ENCODE measurements at regions of chr3 and their contacts with region 1.

Region 1: GRCh38 chr3:37974121-37975083 is 16.2 kb upstream of the VILL start:
- DNase-seq: peak; percentile 82 to 91 (median 86)
- ATAC-seq: peak; percentile 99
- H3K4me3 ChIP-seq: no peak overlapping the region
- H3K27ac ChIP-seq: no peak overlapping the region
- H3K4me1 ChIP-seq: peaks cover 0 to 3% of the 10 kb centered on the region in 2 experiments; a peak in 2 of 5 replicates
- H3K27me3 ChIP-seq: no peaks in the 10 kb centered on the region
- CTCF ChIP-seq: peak; percentile 98 to 99 (median 98)
- EP300 ChIP-seq: peak; percentile 44; the same call in 1 of the 2 replicates
- POLR2A ChIP-seq: no peak
- RAD21 ChIP-seq: peak; percentile 91 to 97

Region 2: DNA sequence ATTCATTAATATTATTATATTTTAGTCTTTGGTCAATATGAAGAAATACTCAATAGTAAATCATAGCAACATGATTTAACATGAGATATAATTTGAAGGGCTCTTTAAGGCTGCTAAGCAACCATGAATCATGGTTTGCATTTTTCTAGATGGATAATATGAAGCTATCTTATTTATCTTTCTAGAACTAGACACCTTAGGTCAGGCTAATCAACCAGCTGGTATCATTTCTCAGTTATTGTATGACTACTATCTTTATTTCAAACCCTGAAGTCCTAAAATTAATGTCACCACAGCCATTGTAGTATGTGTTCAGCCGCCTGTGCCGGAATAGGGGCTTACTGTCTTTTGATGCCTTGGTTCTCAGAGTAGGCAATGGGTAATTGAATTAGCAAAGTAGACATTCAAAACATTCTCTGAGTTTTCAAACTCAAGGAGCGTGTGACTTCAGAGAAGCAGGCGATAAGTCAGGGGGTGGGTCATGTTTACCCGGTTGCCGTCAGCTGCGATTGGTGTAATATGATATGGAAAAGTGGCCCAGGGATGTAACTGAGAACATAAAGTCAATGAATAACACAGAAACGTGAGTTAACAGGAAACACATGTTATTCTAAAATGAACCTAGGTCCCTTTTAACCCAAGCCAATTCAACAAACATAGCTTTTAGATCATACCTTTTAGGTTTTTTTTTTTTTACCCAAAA is 206.1 kb before region 1 on chr3:
- CTCF ChIA-PET with region 1: no interaction called
- POLR2A ChIA-PET with region 1: no interaction called
- in situ Hi-C with region 1: no loop called
- intact Hi-C with region 1: no loop called
- DNase-seq: peak in 2 of 4 experiments; percentile 38 to 55
- ATAC-seq: peak; percentile 48; the same call in 2 of the 3 replicates
- H3K4me3 ChIP-seq: no peak overlapping the region
- H3K27ac ChIP-seq: no peak overlapping the region
- H3K4me1 ChIP-seq: peaks cover 17 to 35% of the 10 kb centered on the region in 2 experiments; a peak in 3 of 5 replicates
- H3K27me3 ChIP-seq: peaks cover 17 to 35% of the 10 kb centered on the region in 2 experiments
- CTCF ChIP-seq: no peak
- EP300 ChIP-seq: no peak
- POLR2A ChIP-seq: no peak
- RAD21 ChIP-seq: no peak

Region 3: DNA sequence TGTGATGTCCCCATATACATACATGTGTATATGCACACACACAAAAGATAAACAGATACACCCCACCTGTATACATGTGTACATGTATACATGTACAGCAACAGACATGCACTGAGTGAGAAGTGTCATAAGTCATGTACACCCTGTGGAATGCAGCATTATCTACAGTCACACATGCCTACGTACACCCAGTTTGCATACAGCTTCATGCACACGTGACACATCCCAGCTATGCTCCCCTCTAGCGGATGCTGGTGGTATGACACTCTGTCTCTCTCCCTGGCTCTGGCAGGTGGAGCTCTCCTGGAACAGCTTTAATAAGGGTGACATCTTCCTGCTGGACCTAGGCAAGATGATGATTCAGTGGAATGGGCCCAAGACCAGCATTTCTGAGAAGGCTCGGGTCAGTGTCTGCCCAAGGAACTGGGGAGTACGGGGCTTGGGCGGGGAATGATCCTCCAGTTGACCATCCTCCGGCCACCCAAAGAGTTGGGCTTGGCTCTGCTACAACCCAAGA is 22.4 kb after region 1 on chr3:
- CTCF ChIA-PET with region 1: interaction called, 62 read pairs
- POLR2A ChIA-PET with region 1: interaction called, 6 read pairs
- in situ Hi-C with region 1: no loop called
- intact Hi-C with region 1: no loop called
- DNase-seq: peak; percentile 69 to 95 (median 78)
- ATAC-seq: peak; percentile 50
- H3K4me3 ChIP-seq: no peak overlapping the region
- H3K27ac ChIP-seq: peak overlapping the region; percentile 27; the same call in 2 of the 3 replicates
- H3K4me1 ChIP-seq: peaks cover 61% of the 10 kb centered on the region in 2 experiments
- H3K27me3 ChIP-seq: no peaks in the 10 kb centered on the region
- CTCF ChIP-seq: peak; percentile 95 to 99 (median 98)
- EP300 ChIP-seq: peak; percentile 69
- POLR2A ChIP-seq: no peak
- RAD21 ChIP-seq: peak; percentile 12 to 75; a peak in 2 of 4 replicates

Region 4: GRCh38 chr3:38018296-38019266 is 44.2 kb after region 1 on chr3:
- CTCF ChIA-PET with region 1: no interaction called
- POLR2A ChIA-PET with region 1: no interaction called
- in situ Hi-C with region 1: no loop called
- intact Hi-C with region 1: loop called (anchors 1 kb)
- DNase-seq: peak; percentile 93 to 97 (median 96)
- ATAC-seq: peak; percentile 82
- H3K4me3 ChIP-seq: peak overlapping the region; percentile 50
- H3K27ac ChIP-seq: peak overlapping the region; percentile 79
- H3K4me1 ChIP-seq: peaks cover 62 to 72% of the 10 kb centered on the region in 2 experiments
- H3K27me3 ChIP-seq: no peaks in the 10 kb centered on the region
- CTCF ChIP-seq: peak; percentile 21 to 49 (median 42); a peak in 4 of 6 replicates
- EP300 ChIP-seq: peak; percentile 55; the same call in 1 of the 2 replicates
- POLR2A ChIP-seq: peak; percentile 85
- RAD21 ChIP-seq: peak in 1 of 2 experiments; percentile 28; a peak in 2 of 4 replicates

Region 5: GRCh38 chr3:38117748-38118420 is 143.5 kb after region 1 on chr3:
- CTCF ChIA-PET with region 1: no interaction called
- POLR2A ChIA-PET with region 1: no interaction called
- in situ Hi-C with region 1: no loop called
- intact Hi-C with region 1: loop called (anchors 5 kb)
- DNase-seq: peak; percentile 83 to 87 (median 84)
- ATAC-seq: peak; percentile 90
- H3K4me3 ChIP-seq: no peak overlapping the region
- H3K27ac ChIP-seq: no peak overlapping the region
- H3K4me1 ChIP-seq: peaks cover 0 to 30% of the 10 kb centered on the region in 2 experiments; a peak in 3 of 5 replicates
- H3K27me3 ChIP-seq: peaks cover 6 to 26% of the 10 kb centered on the region in 2 experiments; a peak in 3 of 5 replicates
- CTCF ChIP-seq: peak; percentile 95 to 98 (median 97)
- EP300 ChIP-seq: no peak
- POLR2A ChIP-seq: 0 out of 2 replicates have a peak, but pooled peaks have one; percentile 21
- RAD21 ChIP-seq: peak; percentile 83 to 95

Region 6: DNA sequence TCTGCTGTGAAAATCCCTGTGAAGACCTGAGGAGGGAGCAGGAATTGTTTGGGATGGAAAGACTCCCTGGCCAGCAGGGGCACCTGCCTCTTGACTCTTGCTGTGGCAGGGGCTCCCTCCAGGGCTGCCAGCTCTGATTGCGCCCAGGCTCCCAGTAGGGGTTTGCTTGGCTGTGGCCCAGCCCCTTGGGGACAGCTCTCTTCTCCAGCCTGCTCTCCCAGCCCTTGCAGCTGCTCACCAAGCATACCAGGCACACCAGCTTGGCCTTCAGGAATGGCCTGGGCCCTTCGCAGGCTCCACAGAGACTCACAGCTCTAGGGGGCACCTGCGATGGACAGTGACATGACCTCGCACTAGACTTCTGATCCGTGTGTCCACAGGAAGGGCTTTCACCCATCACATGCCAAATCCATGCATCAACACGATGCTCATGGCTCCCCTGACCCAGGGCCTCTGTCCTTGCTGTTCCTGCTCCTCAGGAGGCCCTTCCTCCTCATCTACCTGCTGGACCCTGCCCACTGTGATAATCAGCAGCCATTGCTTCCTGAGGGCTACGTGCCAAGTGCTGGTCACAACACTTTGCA is 613.2 kb after region 1 on chr3:
- CTCF ChIA-PET with region 1: no interaction called
- POLR2A ChIA-PET with region 1: no interaction called
- in situ Hi-C with region 1: no loop called
- intact Hi-C with region 1: no loop called
- DNase-seq: no peak
- ATAC-seq: no peak
- H3K4me3 ChIP-seq: no peak overlapping the region
- H3K27ac ChIP-seq: no peak overlapping the region
- H3K4me1 ChIP-seq: no peaks in the 10 kb centered on the region
- H3K27me3 ChIP-seq: peaks cover 0 to 41% of the 10 kb centered on the region in 2 experiments; a peak in 3 of 5 replicates
- CTCF ChIP-seq: no peak
- EP300 ChIP-seq: no peak
- POLR2A ChIP-seq: no peak
- RAD21 ChIP-seq: no peak

Measured in K562 (cell line).